Dorsolateral prefrontal cortex (tissue), 120 donors: ENCODE measurements at regions of chrX and their contacts with region 1.

Region 1: GRCh38 chrX:155216179-155216939 is at the start of gene VBP1:
- DNase-seq: peak; percentile 82 to 95 (median 93)
- H3K4me3 ChIP-seq: peak within 1 kb of the TSS; percentile 44 to 80 (median 63)
- H3K27ac ChIP-seq: peak within 1 kb of the TSS; percentile 12 to 93 (median 85)
- H3K27me3 ChIP-seq: peaks cover 0 to 28% (median 0%) of the 10 kb centered on the region in 45 donors
- CTCF ChIP-seq: peak in 48 of 56 donors; percentile 8 to 57 (median 36)
- total RNA-seq, gene VBP1: 34.0 to 81.7 (median 54.7) TPM

Region 2: GRCh38 chrX:154748712-154749343 is 467.5 kb before region 1 on chrX:
- intact Hi-C with region 1: no loop called
- DNase-seq: no peak
- H3K4me3 ChIP-seq: peak overlapping the region in 9 of 59 donors; percentile 4 to 59 (median 7)
- H3K27ac ChIP-seq: peak overlapping the region in 1 of 59 donors; percentile 26
- H3K27me3 ChIP-seq: peaks cover 0 to 57% (median 17%) of the 10 kb centered on the region in 45 donors
- CTCF ChIP-seq: peak; percentile 61 to 88 (median 78)

Region 3: GRCh38 chrX:155263854-155264628 is 47.7 kb after region 1 on chrX and contains the start of gene RAB39B:
- intact Hi-C with region 1: loop called (anchors 2 to 5 kb)
- DNase-seq: peak; percentile 54 to 88 (median 78)
- H3K4me3 ChIP-seq: peak within 1 kb of the TSS; percentile 47 to 81 (median 66)
- H3K27ac ChIP-seq: peak within 1 kb of the TSS in 45 of 59 donors; percentile 13 to 86 (median 72)
- H3K27me3 ChIP-seq: peaks cover 0 to 11% (median 0%) of the 10 kb centered on the region in 45 donors
- CTCF ChIP-seq: peak in 14 of 56 donors; percentile 6 to 35 (median 14)
- total RNA-seq, gene RAB39B: 8.9 to 28.9 (median 20.2) TPM

Region 4: GRCh38 chrX:155389634-155390033 is 173.3 kb after region 1 on chrX:
- intact Hi-C with region 1: no loop called
- DNase-seq: no peak
- H3K4me3 ChIP-seq: no peak overlapping the region
- H3K27ac ChIP-seq: no peak overlapping the region
- H3K27me3 ChIP-seq: peaks cover 0 to 18% (median 0%) of the 10 kb centered on the region in 45 donors
- CTCF ChIP-seq: no peak